T-cell (primary cell): ENCODE measurements at regions of chr6 and their contacts with region 1.

Region 1: GRCh38 chr6:37169496-37170272 is at the start of gene PIM1:
- DNase-seq: peak; percentile 89 to 100 (median 99)
- ATAC-seq: peak; percentile 79 to 88 (median 82)
- H3K4me3 ChIP-seq: peak within 1 kb of the TSS; percentile 78 to 90
- H3K4me3 Mint-ChIP-seq: peak within 1 kb of the TSS; percentile 90 to 93 (median 92)
- H3K27ac ChIP-seq: peak within 1 kb of the TSS; percentile 77
- H3K27ac Mint-ChIP-seq: peak within 1 kb of the TSS; percentile 95 to 99
- H3K4me1 ChIP-seq: peaks cover 19 to 36% of the 10 kb centered on the region in 2 experiments
- H3K4me1 Mint-ChIP-seq: peaks cover 37 to 39% (median 39%) of the 10 kb centered on the region in 3 donors
- H3K27me3 ChIP-seq: no peaks in the 10 kb centered on the region
- H3K27me3 Mint-ChIP-seq: no peaks in the 10 kb centered on the region
- total RNA-seq, gene PIM1: 225 to 334 (median 313) TPM

Region 2: DNA sequence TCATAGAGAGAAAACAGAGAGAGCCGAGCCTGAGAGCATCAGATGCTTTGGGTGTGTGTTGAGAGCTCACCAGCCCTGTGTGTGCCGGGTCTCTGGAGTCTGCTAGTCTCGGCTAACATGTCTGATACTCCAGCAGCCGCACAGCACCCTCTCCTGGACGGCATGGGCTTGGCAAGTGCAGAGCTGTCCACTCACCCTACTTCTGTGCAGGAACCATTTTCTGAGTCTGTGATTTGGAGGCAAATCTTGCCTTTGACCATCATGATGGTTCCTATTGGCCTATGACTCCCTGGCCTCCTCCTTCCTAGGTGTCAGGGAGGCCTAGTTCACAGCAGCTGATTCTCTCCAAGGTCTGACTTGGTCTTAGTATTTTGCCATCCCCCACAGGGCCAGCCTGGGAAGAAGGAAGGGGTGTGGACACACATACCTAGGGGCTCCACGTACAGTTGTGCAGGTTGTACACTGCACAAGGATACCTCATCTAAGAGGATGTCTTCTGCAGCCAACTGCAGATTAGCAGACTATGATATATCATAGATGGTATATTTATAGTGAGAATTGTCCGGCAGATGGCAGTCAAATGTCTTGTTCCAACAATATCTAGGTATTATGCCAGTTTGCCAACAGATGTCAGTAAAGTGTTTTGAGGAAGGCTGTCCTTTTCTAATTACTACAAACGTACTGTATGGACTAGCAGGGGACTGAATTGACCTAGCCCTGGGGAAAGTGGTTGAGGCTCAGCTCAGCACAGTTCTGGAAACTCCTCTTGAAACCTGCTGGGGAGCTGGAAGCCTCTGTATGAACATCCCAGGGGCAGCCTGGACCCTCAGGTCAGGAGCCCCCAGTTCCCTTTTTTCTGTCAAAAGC is 151.3 kb before region 1 on chr6:
- CTCF ChIA-PET with region 1: interaction called, 31 to 142 read pairs
- POLR2A ChIA-PET with region 1: interaction called in 1 of 2 experiments, 3 read pairs
- DNase-seq: peak; percentile 76 to 91 (median 86)
- ATAC-seq: peak; percentile 88 to 91 (median 90)
- H3K4me3 ChIP-seq: no peak overlapping the region
- H3K4me3 Mint-ChIP-seq: peak overlapping the region in 1 of 3 donors; percentile 3
- H3K27ac ChIP-seq: peak overlapping the region; percentile 31
- H3K27ac Mint-ChIP-seq: peak overlapping the region; percentile 73 to 78
- H3K4me1 ChIP-seq: peaks cover 7 to 46% of the 10 kb centered on the region in 2 experiments
- H3K4me1 Mint-ChIP-seq: peaks cover 44 to 50% (median 48%) of the 10 kb centered on the region in 3 donors
- H3K27me3 ChIP-seq: no peaks in the 10 kb centered on the region
- H3K27me3 Mint-ChIP-seq: no peaks in the 10 kb centered on the region

Region 3: DNA sequence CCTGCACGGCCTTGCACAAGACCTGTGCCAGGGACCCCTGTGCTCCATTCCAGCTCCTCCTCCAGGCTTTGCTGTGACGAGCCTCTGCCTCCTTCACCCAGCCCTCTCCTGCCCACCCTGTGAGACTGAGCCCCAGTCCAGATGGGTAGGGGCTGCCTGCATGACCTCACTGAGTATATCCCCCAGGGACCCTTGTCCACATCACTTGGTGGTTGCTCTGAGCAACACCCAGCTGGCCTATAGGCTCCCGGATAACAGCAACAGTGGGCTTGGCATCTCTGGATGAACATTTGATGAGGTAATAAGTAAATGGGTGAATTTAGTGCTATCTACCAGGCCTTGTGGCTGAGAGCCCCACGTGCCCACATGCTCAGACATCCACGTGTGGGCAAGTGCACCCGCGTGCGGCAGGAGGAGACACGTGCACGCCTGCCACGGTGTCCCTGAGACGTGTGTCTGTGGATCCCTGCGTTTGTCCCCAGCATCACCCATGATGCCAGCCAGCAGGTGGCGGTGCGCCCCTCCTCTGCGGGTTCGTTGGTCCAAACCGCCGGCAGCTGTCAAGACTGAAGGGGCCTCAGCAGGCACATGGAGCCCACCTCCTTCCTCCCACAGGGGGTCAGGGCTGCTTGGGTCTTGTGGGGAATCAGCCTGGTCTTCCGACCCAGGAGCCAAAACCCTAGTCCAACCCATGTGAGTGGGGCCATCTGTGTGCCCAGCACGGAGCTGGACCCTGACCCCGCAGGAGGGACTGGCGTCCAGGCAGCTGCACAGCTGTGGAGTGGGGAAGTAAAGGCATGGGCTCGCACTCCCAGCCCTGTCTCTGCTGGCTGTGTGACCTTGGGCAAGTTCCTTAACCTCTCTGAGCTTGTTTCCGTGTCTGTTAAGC is 118.3 kb before region 1 on chr6:
- CTCF ChIA-PET with region 1: interaction called, 8 to 74 read pairs
- POLR2A ChIA-PET with region 1: interaction called, 5 to 7 read pairs
- DNase-seq: peak; percentile 76 to 93 (median 86)
- ATAC-seq: peak; percentile 53 to 79 (median 62)
- H3K4me3 ChIP-seq: no peak overlapping the region
- H3K4me3 Mint-ChIP-seq: peak overlapping the region; percentile 31 to 72 (median 49)
- H3K27ac ChIP-seq: peak overlapping the region; percentile 93
- H3K27ac Mint-ChIP-seq: peak overlapping the region; percentile 87 to 95
- H3K4me1 ChIP-seq: peaks cover 44 to 60% of the 10 kb centered on the region in 2 experiments
- H3K4me1 Mint-ChIP-seq: peaks cover 58 to 66% (median 62%) of the 10 kb centered on the region in 3 donors
- H3K27me3 ChIP-seq: no peaks in the 10 kb centered on the region
- H3K27me3 Mint-ChIP-seq: no peaks in the 10 kb centered on the region

Region 4: DNA sequence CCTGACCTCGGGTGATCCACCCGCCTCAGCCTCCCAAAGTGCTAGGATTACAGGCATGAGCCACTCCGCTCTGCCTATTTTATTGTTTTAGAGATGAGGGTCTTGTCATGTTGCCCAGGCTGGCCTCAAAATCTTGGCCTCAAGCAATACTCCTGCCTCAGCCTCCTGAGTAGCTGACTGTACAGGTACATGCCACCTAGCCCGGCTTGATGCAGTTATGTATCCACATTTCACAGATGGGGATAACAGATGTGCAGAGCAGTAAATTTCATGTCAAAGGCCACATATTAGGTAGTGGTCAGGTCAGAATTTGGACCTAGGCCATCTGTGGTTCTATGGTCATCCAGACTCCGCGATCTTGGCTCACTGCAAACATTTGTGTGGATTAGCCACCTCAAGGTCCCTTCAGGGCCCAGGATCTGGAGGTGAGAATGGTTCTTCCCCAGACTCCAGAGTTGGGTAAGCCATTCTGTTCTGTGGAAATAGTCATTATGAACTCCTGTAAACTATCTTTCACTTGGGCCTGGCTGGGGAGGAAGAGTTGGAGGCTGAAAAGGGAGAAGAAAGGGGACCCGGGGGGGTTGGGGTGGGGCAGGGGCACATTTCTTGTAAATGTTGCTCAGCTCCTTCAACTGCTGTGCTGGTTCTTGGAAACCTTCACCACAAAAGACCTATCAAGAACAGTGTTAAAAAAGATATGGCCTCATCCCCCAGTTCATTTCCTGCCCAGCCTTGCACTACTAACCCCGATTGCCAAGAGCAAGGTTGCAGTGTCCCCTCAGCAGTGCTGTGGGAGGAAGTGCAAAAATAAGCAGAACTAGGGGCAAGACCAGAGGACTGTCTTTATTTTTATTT is 13.3 kb after region 1 on chr6:
- CTCF ChIA-PET with region 1: interaction called in 1 of 2 experiments, 16 read pairs
- POLR2A ChIA-PET with region 1: no interaction called
- DNase-seq: peak; percentile 36 to 83 (median 67)
- ATAC-seq: peak; percentile 96 to 97 (median 97)
- H3K4me3 ChIP-seq: no peak overlapping the region
- H3K4me3 Mint-ChIP-seq: peak overlapping the region in 2 of 3 donors; percentile 54 to 68
- H3K27ac ChIP-seq: peak overlapping the region; percentile 87
- H3K27ac Mint-ChIP-seq: peak overlapping the region; percentile 97 to 99
- H3K4me1 ChIP-seq: peaks cover 17 to 74% of the 10 kb centered on the region in 2 experiments
- H3K4me1 Mint-ChIP-seq: peaks cover 54 to 75% (median 63%) of the 10 kb centered on the region in 3 donors
- H3K27me3 ChIP-seq: no peaks in the 10 kb centered on the region
- H3K27me3 Mint-ChIP-seq: no peaks in the 10 kb centered on the region

Region 5: GRCh38 chr6:37207903-37208456 is 38.3 kb after region 1 on chr6:
- CTCF ChIA-PET with region 1: interaction called, 9 to 72 read pairs
- POLR2A ChIA-PET with region 1: interaction called in 1 of 2 experiments, 3 read pairs
- DNase-seq: peak; percentile 72 to 91 (median 85)
- ATAC-seq: peak; percentile 61 to 81 (median 74)
- H3K4me3 ChIP-seq: no peak overlapping the region
- H3K4me3 Mint-ChIP-seq: peak overlapping the region in 2 of 3 donors; percentile 6 to 60
- H3K27ac ChIP-seq: peak overlapping the region; percentile 32
- H3K27ac Mint-ChIP-seq: peak overlapping the region; percentile 91 to 92
- H3K4me1 ChIP-seq: peaks cover 20 to 54% of the 10 kb centered on the region in 2 experiments
- H3K4me1 Mint-ChIP-seq: peaks cover 59 to 65% (median 64%) of the 10 kb centered on the region in 3 donors
- H3K27me3 ChIP-seq: no peaks in the 10 kb centered on the region
- H3K27me3 Mint-ChIP-seq: no peaks in the 10 kb centered on the region

Region 6: DNA sequence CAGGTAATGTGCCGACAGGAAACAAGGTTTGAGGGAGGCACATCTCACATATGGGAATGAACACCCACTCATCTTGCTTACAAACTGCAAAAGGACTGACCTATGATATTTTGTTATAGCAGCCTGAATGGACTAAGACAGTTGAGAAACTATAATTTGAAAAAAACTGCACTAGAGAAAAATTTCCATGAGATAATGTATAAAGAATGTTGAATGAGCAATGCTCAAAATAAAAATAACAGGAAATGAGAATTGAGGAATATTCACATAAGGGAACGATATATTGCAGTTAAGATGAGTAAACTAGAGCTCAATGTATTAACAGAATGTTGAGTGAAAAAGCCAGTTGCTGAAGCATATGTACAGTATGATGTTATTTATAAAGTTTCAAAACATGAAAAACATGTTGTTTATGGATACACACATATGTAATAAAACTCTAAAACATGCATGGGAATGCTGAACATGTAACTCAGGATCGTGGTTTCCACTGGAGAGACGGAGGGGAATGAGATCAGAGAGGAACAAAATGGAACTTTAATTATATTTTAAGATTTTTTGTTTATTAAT is 81.6 kb after region 1 on chr6:
- CTCF ChIA-PET with region 1: no interaction called
- POLR2A ChIA-PET with region 1: no interaction called
- DNase-seq: no peak
- ATAC-seq: no peak
- H3K4me3 ChIP-seq: no peak overlapping the region
- H3K4me3 Mint-ChIP-seq: no peak overlapping the region
- H3K27ac ChIP-seq: no peak overlapping the region
- H3K27ac Mint-ChIP-seq: no peak overlapping the region
- H3K4me1 ChIP-seq: no peaks in the 10 kb centered on the region
- H3K4me1 Mint-ChIP-seq: no peaks in the 10 kb centered on the region
- H3K27me3 ChIP-seq: no peaks in the 10 kb centered on the region
- H3K27me3 Mint-ChIP-seq: peaks cover 0 to 2% of the 10 kb centered on the region in 2 donors